ENCODE measurements at regions of chr13 and their contacts with region 1.

Region 1: GRCh38 chr13:80342471-80343380 is 1.8 kb upstream of the SPRY2 start:
- DNase-seq: no peak
- H3K4me3 ChIP-seq: peak overlapping the region; percentile 78 to 82
- H3K27ac ChIP-seq: peak overlapping the region; percentile 83
- H3K4me1 ChIP-seq: peaks cover 19% of the 10 kb centered on the region
- H3K27me3 ChIP-seq: no peaks in the 10 kb centered on the region
- CTCF ChIP-seq: peak; percentile 81 to 98 (median 92)
- POLR2A ChIP-seq: no peak

Region 2: DNA sequence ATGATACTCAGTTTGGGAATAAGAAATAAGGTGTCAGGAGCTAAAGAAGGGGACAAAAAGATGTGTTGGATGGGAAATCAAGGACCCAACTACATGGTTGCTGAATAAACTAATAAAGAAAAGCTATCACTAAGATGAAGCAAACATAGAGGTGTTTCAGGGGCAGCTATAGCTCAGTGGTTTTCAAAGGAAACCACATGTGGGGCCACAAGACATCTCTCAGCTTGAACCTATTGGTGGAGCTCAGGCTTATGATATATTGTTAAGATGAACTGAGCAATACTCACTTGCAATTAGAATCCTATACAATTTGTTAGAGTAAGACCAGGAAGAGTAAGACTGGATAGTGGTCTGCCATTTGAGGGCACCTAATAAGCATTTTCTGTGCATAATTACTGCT is 43.3 kb after region 1 on chr13:
- intact Hi-C with region 1: loop called (anchors 5 kb)
- DNase-seq: no peak
- H3K4me3 ChIP-seq: no peak overlapping the region
- H3K27ac ChIP-seq: no peak overlapping the region
- H3K4me1 ChIP-seq: no peaks in the 10 kb centered on the region
- H3K27me3 ChIP-seq: no peaks in the 10 kb centered on the region
- CTCF ChIP-seq: no peak
- POLR2A ChIP-seq: no peak

Region 3: DNA sequence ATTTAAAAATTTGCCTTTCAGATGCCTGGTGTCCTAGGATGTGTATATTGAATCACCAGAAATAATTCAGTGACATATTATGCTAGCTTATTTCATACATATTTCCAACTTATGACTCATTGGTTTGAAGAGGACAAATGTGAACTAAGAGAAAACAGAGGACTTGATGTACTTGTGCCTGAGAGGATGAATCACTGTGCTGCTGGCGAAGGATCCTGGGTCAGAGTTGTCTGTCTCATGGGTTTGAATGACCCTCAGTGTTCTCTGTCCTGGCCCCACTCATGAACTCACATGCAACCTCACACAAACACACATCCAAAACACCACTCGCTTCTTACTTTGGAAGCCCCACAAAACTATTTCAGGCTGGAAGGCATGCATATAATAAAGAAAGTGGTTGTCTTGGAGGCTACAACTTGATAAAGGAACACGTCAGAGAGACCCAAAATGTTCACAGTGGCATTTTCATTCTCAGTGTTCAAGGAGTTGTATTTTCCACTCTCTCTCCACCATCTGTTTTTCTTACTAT is 127.2 kb after region 1 on chr13:
- intact Hi-C with region 1: loop called (anchors 5 kb)
- DNase-seq: peak in 1 of 2 donors; percentile 99
- H3K4me3 ChIP-seq: no peak overlapping the region
- H3K27ac ChIP-seq: peak overlapping the region; percentile 82
- H3K4me1 ChIP-seq: peaks cover 19% of the 10 kb centered on the region
- H3K27me3 ChIP-seq: no peaks in the 10 kb centered on the region
- CTCF ChIP-seq: no peak
- POLR2A ChIP-seq: no peak

Region 4: DNA sequence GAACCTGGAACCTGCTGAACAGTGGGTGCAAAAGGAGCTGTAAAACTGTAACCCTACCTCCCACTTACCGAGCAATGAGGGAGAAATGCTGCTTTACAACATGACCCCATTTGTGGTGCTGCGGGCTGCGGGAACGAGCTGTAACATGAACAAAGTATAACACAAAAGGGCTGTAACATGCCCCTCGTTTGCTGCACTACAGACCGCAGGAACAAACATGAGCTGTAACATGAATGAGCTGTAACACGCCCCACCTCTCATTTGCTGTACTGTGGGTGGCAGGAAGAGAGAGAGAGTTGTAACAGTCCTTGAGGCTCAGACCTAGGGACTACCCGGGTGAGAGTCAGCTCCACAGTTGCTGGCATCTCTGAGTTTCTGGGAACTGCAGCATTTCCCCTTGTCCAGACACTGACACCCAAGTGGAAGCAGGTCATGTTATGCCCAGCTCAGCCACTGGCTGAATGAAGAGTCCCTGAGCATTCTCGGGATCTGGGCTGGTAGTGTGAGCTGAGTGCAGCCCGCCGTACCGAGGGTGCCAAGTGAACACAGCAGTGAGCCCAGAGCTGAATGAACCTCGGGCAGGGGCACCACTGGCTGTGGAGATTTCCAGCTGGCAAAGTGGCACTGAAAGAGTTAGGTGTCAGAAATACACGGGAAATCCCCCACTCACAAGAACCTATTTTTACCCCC is 1383.5 kb after region 1 on chr13:
- intact Hi-C with region 1: no loop called
- DNase-seq: no peak
- H3K4me3 ChIP-seq: no peak overlapping the region
- H3K27ac ChIP-seq: no peak overlapping the region
- H3K4me1 ChIP-seq: no peaks in the 10 kb centered on the region
- H3K27me3 ChIP-seq: no peaks in the 10 kb centered on the region
- CTCF ChIP-seq: no peak
- POLR2A ChIP-seq: no peak